Activated T-helper 2 cell treated with anti-CD3 and anti-CD28 coated beads, Interferon-gamma antibody, Interleukin-2, Interleukin-4, amounts not matched to agents 10 μg/mL and 5 μg/mL and 100 μg/mL, durations not matched to agents 14 hours and 24 hours and 36 hours (primary cell): ENCODE measurements at regions of chr9 and their contacts with region 1.

Region 1: DNA sequence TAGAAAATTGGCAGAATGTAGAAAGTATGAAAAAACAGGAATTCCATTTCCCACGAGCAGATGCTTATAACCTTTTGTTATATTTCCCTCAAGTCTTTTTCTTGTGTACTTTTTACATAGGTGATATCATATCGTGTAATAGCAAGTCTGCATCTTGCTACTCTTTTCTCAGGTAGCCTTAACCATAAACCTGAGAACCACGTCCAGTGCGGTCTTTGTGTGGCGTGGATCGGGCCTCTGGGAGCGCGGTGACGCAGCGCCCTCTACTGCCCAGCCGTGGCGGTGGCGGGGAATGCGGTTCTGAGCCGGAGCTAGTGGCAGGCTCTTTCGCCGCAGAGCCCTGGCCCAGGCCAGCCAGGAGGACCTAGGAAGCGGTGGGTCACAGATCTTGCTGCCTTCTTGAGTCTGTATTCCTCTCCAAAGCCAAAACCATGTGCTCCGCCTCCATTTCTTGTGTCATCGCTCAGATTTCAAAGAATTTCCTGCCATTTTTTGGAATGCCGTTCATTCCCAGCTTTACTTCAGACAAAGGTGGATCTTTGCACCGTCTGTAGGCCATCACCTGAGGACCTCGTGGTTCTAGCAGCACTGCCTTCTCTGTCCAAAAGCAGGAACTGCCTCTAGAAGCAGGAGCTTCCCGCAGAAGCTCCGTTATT is 71.9 kb downstream of the MVB12B start:
- DNase-seq: peak; percentile 65
- H3K4me3 Mint-ChIP-seq: no peak overlapping the region
- H3K27ac Mint-ChIP-seq: no peak overlapping the region
- H3K4me1 Mint-ChIP-seq: peaks cover 45% of the 10 kb centered on the region
- H3K27me3 Mint-ChIP-seq: peaks cover 36% of the 10 kb centered on the region

Region 2: GRCh38 chr9:125407974-125408900 is 990.3 kb before region 1 on chr9:
- intact Hi-C with region 1: loop called (anchors 2 kb)
- DNase-seq: peak; percentile 59
- H3K4me3 Mint-ChIP-seq: peak overlapping the region; percentile 77
- H3K27ac Mint-ChIP-seq: no peak overlapping the region
- H3K4me1 Mint-ChIP-seq: peaks cover 11% of the 10 kb centered on the region
- H3K27me3 Mint-ChIP-seq: peaks cover 15% of the 10 kb centered on the region

Region 3: GRCh38 chr9:126108240-126108639 is 290.3 kb before region 1 on chr9:
- intact Hi-C with region 1: no loop called
- DNase-seq: no peak
- H3K4me3 Mint-ChIP-seq: no peak overlapping the region
- H3K27ac Mint-ChIP-seq: no peak overlapping the region
- H3K4me1 Mint-ChIP-seq: no peaks in the 10 kb centered on the region
- H3K27me3 Mint-ChIP-seq: peaks cover 5% of the 10 kb centered on the region

Region 4: GRCh38 chr9:126326228-126327005 is 72.1 kb before region 1 on chr9 and contains the start of gene MVB12B:
- intact Hi-C with region 1: loop called (anchors 5 kb)
- DNase-seq: peak; percentile 25
- H3K4me3 Mint-ChIP-seq: peak within 1 kb of the TSS; percentile 66
- H3K27ac Mint-ChIP-seq: no peak within 1 kb of the TSS
- H3K4me1 Mint-ChIP-seq: peaks cover 4% of the 10 kb centered on the region
- H3K27me3 Mint-ChIP-seq: peaks cover 60% of the 10 kb centered on the region
- total RNA-seq, gene MVB12B: 0.23 and 0.50 TPM in 2 replicates

Region 5: GRCh38 chr9:126375386-126375785 is 23.1 kb before region 1 on chr9:
- intact Hi-C with region 1: no loop called
- DNase-seq: no peak
- H3K4me3 Mint-ChIP-seq: no peak overlapping the region
- H3K27ac Mint-ChIP-seq: no peak overlapping the region
- H3K4me1 Mint-ChIP-seq: peaks cover 9% of the 10 kb centered on the region
- H3K27me3 Mint-ChIP-seq: peaks cover 27% of the 10 kb centered on the region

Region 6: GRCh38 chr9:126439402-126439765 is 40.9 kb after region 1 on chr9:
- intact Hi-C with region 1: loop called (anchors 1 kb)
- DNase-seq: no peak
- H3K4me3 Mint-ChIP-seq: no peak overlapping the region
- H3K27ac Mint-ChIP-seq: no peak overlapping the region
- H3K4me1 Mint-ChIP-seq: peaks cover 15% of the 10 kb centered on the region
- H3K27me3 Mint-ChIP-seq: peaks cover 28% of the 10 kb centered on the region

Region 7: DNA sequence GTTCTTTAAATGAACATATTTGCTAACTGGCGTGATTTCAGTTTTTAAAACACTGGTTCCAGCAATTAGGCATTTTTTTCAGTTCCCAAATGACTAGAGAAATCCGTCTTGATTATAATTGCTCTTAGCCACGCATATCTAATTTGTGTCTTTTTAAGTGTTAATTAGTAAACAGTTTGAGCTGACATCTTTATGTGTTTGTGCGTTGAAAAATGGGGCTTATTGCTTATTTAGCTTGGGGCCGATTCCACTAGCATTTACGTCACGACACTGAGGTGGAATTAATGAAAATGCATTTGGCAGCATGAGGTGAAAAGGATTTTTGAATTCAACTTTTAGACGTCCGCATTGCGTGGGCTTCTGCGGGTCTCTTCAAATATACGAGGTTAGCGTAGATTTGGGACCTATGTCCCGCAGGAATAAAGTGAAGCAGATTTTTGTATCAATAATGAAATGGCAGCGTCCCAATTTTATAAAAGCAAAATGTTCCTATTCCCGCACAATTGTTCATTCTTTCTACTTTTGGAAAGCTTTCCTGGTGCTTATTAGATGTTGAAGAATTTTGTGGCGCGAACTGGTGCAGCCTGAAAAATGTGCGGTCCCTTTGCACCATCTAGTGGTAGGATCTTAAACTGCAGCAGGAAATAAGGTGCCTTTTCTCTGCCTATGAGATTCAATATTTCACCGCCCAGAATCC is 92.5 kb after region 1 on chr9:
- intact Hi-C with region 1: loop called (anchors 2 kb)
- DNase-seq: peak; percentile 36
- H3K4me3 Mint-ChIP-seq: no peak overlapping the region
- H3K27ac Mint-ChIP-seq: no peak overlapping the region
- H3K4me1 Mint-ChIP-seq: peaks cover 4% of the 10 kb centered on the region
- H3K27me3 Mint-ChIP-seq: peaks cover 54% of the 10 kb centered on the region

Region 8: DNA sequence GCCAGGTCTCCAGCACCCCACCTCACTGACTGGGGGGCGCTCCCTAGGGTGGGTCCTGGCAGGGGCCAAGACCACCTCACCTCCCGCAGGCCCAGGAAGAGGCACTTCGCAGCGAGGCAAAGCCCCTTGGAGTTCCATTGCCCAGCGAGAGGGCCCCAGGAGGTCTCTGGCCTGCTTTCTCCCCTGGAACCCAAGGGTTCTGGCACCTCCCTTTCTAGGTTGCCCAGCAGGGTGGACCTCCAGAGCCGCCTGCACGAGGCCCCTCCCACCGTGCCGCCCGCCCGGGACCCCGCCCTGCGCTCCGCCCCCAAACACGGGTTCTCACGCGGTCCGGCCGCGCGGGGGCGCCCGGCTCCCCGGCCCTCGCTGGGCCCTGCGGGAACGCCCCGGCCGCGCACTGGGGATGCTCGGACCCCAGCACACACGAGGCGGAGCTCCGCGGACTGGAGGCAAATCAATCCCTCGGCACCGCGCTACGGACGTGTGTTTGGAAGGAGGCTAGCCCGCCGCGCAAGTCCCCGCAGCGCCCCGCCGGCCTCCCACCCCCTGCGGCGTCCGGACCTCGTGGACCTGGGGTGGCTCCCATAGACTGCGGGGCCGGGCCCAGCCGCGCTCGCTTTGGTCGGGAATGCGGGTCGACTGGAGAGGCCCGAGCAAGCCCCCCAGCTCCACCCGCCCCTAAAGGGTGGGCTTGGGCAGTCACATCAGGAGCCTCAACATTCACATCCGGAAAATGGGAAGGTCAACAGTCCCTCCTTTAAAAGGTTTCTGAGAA is 115.7 kb after region 1 on chr9:
- intact Hi-C with region 1: no loop called
- DNase-seq: peak; percentile 55
- H3K4me3 Mint-ChIP-seq: no peak overlapping the region
- H3K27ac Mint-ChIP-seq: no peak overlapping the region
- H3K4me1 Mint-ChIP-seq: peaks cover 22% of the 10 kb centered on the region
- H3K27me3 Mint-ChIP-seq: peaks cover 71% of the 10 kb centered on the region

Region 9: GRCh38 chr9:126626127-126626925 is 227.8 kb after region 1 on chr9:
- intact Hi-C with region 1: no loop called
- DNase-seq: no peak
- H3K4me3 Mint-ChIP-seq: peak overlapping the region; percentile 40
- H3K27ac Mint-ChIP-seq: no peak overlapping the region
- H3K4me1 Mint-ChIP-seq: peaks cover 3% of the 10 kb centered on the region
- H3K27me3 Mint-ChIP-seq: peaks cover 83% of the 10 kb centered on the region